Cardiac septum (tissue), 1 donor: ENCODE measurements at regions of chr12 and their contacts with region 1.

Region 1: GRCh38 chr12:31728917-31729640 is at the start of gene AMN1:
- DNase-seq: peak; percentile 100
- total RNA-seq, gene AMN1: 9.2 TPM

Region 2: GRCh38 chr12:31589904-31590641 is 139.0 kb before region 1 on chr12:
- intact Hi-C with region 1: loop called (anchors 2 kb)
- DNase-seq: peak; percentile 84

Region 3: GRCh38 chr12:31659087-31659933 is 69.8 kb before region 1 on chr12 and contains the start of gene ETFBKMT:
- intact Hi-C with region 1: loop called (anchors 5 kb)
- DNase-seq: peak; percentile 92
- total RNA-seq, gene ETFBKMT: 5.7 TPM

Region 4: GRCh38 chr12:31749024-31749704 is 20.1 kb after region 1 on chr12:
- intact Hi-C with region 1: loop called (anchors 1 kb)
- DNase-seq: no peak

Region 5: DNA sequence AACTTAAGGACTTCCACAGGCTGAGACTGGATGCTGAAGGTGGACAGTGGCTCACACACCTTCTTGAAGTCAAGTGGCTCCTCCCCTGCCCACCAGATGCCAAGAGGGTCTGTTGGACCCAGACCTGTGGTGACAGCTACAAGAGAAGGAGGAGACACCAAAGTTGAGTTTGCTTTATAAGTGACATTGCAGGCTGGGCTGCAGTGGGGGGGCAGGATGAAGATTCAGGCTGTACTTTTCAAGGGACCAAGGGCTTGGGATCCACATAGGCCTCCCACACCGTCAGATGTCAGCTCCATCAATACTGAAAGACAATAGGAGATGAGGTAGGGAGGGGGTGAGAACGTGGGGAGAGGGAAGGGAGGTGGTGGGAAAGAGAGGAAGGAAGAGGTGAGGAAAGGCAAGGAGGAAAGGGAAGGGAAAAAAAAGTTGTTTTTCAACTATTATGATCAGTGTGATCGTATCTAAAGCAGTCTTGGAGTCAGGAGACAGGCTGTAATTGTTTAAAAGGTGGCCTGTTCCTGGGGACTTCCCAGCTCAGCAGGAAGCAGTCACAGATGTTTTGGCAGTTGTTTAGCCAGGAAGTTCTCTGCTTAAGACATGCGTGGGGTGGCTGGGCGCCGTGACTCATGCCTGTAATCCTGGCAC is 146.0 kb after region 1 on chr12:
- intact Hi-C with region 1: loop called (anchors 5 kb)
- DNase-seq: peak; percentile 82

Region 6: DNA sequence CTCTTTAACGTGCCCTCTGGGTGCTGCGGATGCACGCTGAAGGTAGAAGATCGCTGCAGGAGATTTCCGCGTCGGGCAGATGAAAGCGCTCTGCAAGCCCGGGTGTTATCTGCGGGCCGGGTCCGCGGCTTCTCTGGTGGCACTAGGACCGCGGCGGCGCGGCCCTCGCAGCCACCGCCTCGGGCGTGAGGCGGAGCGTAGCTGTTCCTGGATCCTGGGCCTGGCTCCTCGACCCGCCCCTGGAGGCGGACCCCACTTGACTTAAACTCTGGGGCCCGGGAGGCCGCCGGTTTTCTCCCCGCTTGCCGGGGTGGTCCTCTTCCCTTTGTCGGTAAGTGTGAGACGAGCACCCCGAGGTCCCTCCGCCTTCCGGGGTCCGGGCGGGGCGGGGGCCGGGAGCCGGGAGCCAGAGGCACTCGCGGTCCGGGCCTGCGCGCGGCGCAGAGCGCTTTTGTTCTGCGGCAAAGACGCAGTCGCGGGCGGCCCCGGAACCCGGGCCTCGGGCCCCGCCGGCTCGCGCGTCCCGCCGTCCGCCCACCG is 230.2 kb after region 1 on chr12 and contains the start of gene RESF1:
- intact Hi-C with region 1: loop called (anchors 5 kb)
- DNase-seq: peak; percentile 96
- total RNA-seq, gene RESF1: 17.3 TPM

Region 7: DNA sequence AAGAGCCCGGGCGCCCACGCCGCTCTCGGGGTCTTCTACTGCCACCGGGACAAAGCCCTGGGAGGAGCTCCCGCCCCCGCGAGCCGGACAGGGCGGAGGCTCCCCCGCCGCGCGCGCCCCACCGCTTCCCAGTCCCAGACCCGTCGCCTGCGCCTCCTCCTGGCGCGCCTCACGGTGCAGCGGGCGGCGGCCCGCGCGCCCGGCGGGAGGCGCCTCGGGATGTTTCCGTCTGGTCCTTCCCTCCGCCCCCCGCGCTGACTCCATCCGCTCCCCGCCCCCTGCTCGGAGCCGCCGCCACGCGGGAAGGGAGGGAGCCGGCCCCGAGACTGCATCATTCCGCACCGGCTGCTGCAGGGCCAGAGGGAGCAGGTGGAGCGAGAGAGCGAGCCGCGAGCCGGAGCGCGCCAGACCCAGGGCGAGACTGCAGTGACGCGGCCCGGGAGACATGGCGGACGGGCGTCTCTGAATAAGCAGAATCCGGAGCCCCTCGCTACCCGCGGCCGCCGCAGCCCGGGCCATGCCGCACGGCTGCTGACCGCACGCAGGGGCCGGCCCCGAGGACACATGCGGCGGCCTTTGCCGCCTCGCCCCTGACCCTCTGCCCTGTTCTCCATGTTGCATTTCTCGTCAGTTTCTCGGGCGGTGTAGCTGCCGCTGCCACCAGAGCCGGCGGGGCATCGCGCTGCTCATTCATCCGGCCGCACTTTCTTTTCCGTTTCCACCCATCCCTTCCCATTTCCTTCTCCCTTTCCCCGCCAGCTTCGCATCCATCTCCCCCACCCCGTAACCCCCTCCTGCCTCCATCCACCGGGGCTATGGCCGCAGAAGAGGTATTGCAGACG is 377.7 kb after region 1 on chr12 and contains the start of gene BICD1:
- intact Hi-C with region 1: loop called (anchors 10 kb)
- DNase-seq: peak; percentile 95
- total RNA-seq, gene BICD1: 19.8 TPM